HCT116 (cell line): ENCODE measurements at regions of chr14 and their contacts with region 1.

Region 1: GRCh38 chr14:105086833-105087307 is 21.6 kb upstream of the GPR132 start:
- DNase-seq: peak; percentile 24
- ATAC-seq: peak; percentile 59
- H3K4me3 ChIP-seq: peak overlapping the region; percentile 53 to 66
- H3K27ac ChIP-seq: peak overlapping the region; percentile 73
- H3K4me1 ChIP-seq: peaks cover 45 to 67% of the 10 kb centered on the region in 2 experiments
- H3K27me3 ChIP-seq: no peaks in the 10 kb centered on the region
- CTCF ChIP-seq: peak in 2 of 3 experiments; percentile 72 to 92; a peak in 4 of 6 replicates
- POLR2A ChIP-seq: no peak
- RAD21 ChIP-seq: no peak

Region 2: GRCh38 chr14:104926619-104927431 is 160.0 kb before region 1 on chr14:
- CTCF ChIA-PET with region 1: no interaction called
- POLR2A ChIA-PET with region 1: no interaction called
- RAD21 ChIA-PET with region 1: no interaction called
- intact Hi-C with region 1: no loop called
- DNase-seq: no peak
- ATAC-seq: peak; percentile 41
- H3K4me3 ChIP-seq: no peak overlapping the region
- H3K27ac ChIP-seq: no peak overlapping the region
- H3K4me1 ChIP-seq: no peaks in the 10 kb centered on the region
- H3K27me3 ChIP-seq: no peaks in the 10 kb centered on the region
- CTCF ChIP-seq: no peak
- POLR2A ChIP-seq: no peak
- RAD21 ChIP-seq: no peak

Region 3: DNA sequence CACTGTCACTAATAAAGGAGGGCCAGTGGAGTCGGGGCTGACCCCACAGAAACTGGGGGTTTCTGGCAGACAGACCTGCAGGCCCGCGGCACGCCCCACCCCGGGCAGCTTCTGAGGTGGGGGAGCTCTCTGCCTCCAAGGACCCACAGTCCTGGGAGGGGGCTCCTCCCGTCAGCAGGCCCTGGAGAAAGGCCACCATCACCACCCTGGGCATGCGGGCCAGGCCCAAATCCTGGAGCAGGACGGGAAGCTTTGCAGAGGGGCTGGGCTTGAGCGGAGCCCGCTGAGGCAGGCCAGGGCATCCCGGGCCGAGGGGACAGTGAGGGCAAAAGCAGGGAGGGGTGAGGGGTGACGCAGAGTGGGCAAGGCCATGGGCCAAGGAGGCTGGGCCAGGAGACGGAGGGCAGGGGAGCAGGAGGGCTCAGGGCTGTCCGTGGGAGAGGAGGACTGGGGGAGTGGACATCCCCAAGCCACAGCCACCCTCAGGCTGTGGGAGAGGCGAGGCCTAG is 10.5 kb before region 1 on chr14:
- CTCF ChIA-PET with region 1: no interaction called
- POLR2A ChIA-PET with region 1: no interaction called
- RAD21 ChIA-PET with region 1: no interaction called
- intact Hi-C with region 1: no loop called
- DNase-seq: no peak
- ATAC-seq: no peak
- H3K4me3 ChIP-seq: no peak overlapping the region
- H3K27ac ChIP-seq: no peak overlapping the region
- H3K4me1 ChIP-seq: no peaks in the 10 kb centered on the region
- H3K27me3 ChIP-seq: no peaks in the 10 kb centered on the region
- CTCF ChIP-seq: no peak
- POLR2A ChIP-seq: no peak
- RAD21 ChIP-seq: no peak

Region 4: DNA sequence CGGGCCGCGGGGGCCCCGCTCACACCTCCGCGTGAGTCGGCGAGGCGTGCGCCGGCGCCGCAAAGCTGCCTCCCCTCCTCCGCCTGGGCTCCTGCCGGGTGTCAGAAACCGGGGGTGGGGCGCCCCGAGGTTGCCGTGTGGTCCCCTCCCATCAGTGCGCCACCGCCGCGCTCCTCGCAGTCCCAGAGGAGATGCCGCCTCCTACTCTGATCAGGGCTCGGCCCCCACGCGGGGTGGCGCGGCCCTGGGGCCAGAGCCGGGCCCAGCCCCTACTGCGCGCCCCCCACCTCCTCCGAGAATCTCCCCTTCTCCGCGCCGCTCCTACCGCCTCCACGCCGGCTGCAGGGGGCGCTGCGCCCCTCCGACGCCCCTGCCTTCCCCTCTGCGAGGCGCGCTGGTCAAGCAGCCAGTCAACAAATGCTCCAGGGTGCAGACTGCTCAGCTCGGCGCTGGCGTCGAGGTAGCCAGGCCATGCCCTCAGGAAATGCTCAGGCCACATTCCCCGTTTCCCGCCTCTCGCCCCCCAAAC is 82.2 kb after region 1 on chr14:
- CTCF ChIA-PET with region 1: interaction called, 10 read pairs
- POLR2A ChIA-PET with region 1: interaction called, 3 read pairs
- RAD21 ChIA-PET with region 1: interaction called, 3 to 9 read pairs
- intact Hi-C with region 1: loop called (anchors 2 kb)
- DNase-seq: no peak
- ATAC-seq: peak; percentile 52
- H3K4me3 ChIP-seq: peak overlapping the region; percentile 19 to 48
- H3K27ac ChIP-seq: peak overlapping the region; percentile 50; the same call in 1 of the 2 replicates
- H3K4me1 ChIP-seq: peaks cover 45 to 62% of the 10 kb centered on the region in 2 experiments
- H3K27me3 ChIP-seq: no peaks in the 10 kb centered on the region
- CTCF ChIP-seq: peak in 2 of 3 experiments; percentile 58 to 60; a peak in 4 of 6 replicates
- POLR2A ChIP-seq: no peak
- RAD21 ChIP-seq: no peak

Region 5: GRCh38 chr14:105180592-105181548 is 94.0 kb after region 1 on chr14 and contains the start of gene NUDT14:
- CTCF ChIA-PET with region 1: no interaction called
- POLR2A ChIA-PET with region 1: no interaction called
- RAD21 ChIA-PET with region 1: no interaction called
- intact Hi-C with region 1: loop called (anchors 5 kb)
- DNase-seq: peak; percentile 46
- ATAC-seq: peak; percentile 88
- H3K4me3 ChIP-seq: peak within 1 kb of the TSS; percentile 63 to 68
- H3K27ac ChIP-seq: peak within 1 kb of the TSS; percentile 60; the same call in 1 of the 2 replicates
- H3K4me1 ChIP-seq: peaks cover 12 to 33% of the 10 kb centered on the region in 2 experiments
- H3K27me3 ChIP-seq: no peaks in the 10 kb centered on the region
- CTCF ChIP-seq: no peak
- POLR2A ChIP-seq: no peak
- RAD21 ChIP-seq: no peak
- total RNA-seq, gene NUDT14: 56.1 TPM

Region 6: GRCh38 chr14:105351920-105352851 is 265.3 kb after region 1 on chr14:
- CTCF ChIA-PET with region 1: interaction called, 10 read pairs
- POLR2A ChIA-PET with region 1: interaction called, 3 read pairs
- RAD21 ChIA-PET with region 1: interaction called in 1 of 2 experiments, 5 read pairs
- intact Hi-C with region 1: loop called (anchors 1 kb)
- DNase-seq: peak; percentile 73
- ATAC-seq: peak; percentile 94
- H3K4me3 ChIP-seq: no peak overlapping the region
- H3K27ac ChIP-seq: peak overlapping the region; percentile 29
- H3K4me1 ChIP-seq: peaks cover 8 to 12% of the 10 kb centered on the region in 2 experiments; a peak in 2 of 4 replicates
- H3K27me3 ChIP-seq: no peaks in the 10 kb centered on the region
- CTCF ChIP-seq: peak; percentile 85 to 90 (median 89)
- POLR2A ChIP-seq: no peak
- RAD21 ChIP-seq: peak; percentile 97

Region 7: DNA sequence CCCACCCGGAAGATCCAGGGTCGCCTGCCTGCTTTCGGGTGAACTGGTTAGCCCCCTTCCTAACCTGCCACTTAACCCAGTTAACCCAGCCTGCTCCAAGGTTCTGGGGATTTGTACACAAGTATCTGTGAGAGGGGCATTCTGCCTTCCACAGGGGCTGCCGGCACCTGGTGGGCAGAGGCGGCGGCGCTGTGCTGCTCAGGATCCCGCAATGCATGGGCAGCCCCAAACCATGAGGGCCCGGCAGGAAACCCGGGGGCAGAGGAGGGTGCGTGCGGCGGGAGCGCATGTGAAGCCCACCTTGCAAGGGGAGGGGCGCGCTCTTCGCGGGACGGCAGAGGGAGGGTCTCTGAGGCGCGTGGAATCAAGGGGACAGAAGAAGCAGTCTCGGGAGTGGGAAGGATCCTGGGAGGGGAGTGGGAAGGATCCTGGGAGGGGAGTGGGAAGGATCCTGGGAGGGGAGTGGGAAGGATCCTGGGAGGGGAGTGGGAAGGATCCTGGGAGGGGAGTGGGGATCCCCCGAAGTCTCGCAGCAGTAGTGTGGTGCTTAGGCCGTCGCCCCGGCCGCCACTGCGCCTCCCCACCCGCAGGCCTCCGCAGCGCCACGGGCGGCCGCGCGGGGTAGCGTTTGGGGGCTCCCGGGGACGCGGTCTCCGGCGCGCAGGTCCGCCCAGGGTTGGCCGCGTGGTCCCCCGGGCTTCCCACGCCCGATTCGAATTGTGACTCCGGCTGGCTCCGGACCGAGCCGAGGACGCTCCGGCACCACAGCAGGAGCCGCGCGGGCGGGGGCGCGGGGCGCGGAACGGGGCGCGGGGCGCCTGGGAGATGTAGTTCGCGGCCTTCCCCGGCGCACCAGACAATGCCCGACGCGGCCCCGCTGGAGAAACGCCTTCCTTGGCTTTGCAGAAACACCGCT is 327.8 kb after region 1 on chr14:
- CTCF ChIA-PET with region 1: no interaction called
- POLR2A ChIA-PET with region 1: no interaction called
- RAD21 ChIA-PET with region 1: no interaction called
- intact Hi-C with region 1: no loop called
- DNase-seq: no peak
- ATAC-seq: no peak
- H3K4me3 ChIP-seq: no peak overlapping the region
- H3K27ac ChIP-seq: no peak overlapping the region
- H3K4me1 ChIP-seq: peaks cover 23 to 35% of the 10 kb centered on the region in 2 experiments
- H3K27me3 ChIP-seq: no peaks in the 10 kb centered on the region
- CTCF ChIP-seq: no peak
- POLR2A ChIP-seq: no peak
- RAD21 ChIP-seq: no peak